OCI-LY7 (cell line): ENCODE measurements at regions of chr16 and their contacts with region 1.

Region 1: DNA sequence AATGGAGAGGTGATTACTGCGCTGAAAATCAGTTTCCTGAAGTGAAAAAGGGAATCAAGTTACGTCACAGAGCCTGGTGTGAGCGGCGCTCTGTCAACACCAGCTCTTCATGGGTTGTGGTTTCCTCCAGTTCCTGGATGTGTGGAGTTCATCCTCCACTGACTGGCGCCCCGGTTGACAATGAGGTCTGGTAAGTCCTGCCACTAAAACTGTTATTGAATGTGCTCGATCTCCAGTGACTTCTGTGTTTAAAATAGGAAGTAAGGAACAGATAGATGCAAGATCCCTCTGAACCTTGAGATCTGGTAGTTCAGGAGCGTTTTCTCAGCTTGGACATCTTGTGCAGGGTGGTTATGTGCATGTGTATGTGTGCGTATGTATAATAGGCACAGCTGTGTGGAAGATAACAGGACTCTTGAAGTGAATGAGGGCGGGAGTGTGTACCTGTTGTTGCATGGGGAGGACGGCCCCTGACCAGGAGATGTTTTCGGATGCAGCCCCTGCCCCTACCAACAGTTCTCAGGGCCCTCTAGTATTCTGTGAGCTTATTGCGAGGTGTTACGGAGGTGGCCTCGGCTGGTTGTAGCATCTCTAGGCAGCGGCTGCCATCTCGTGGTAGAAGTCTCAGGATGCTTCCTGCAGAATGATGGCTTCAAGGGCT is 22.0 kb upstream of the GOT2 start:
- DNase-seq: peak; percentile 88
- H3K4me3 ChIP-seq: peak overlapping the region; percentile 5
- H3K27ac ChIP-seq: no peak overlapping the region
- H3K4me1 ChIP-seq: peaks cover 8% of the 10 kb centered on the region
- CTCF ChIP-seq: peak; percentile 97

Region 2: DNA sequence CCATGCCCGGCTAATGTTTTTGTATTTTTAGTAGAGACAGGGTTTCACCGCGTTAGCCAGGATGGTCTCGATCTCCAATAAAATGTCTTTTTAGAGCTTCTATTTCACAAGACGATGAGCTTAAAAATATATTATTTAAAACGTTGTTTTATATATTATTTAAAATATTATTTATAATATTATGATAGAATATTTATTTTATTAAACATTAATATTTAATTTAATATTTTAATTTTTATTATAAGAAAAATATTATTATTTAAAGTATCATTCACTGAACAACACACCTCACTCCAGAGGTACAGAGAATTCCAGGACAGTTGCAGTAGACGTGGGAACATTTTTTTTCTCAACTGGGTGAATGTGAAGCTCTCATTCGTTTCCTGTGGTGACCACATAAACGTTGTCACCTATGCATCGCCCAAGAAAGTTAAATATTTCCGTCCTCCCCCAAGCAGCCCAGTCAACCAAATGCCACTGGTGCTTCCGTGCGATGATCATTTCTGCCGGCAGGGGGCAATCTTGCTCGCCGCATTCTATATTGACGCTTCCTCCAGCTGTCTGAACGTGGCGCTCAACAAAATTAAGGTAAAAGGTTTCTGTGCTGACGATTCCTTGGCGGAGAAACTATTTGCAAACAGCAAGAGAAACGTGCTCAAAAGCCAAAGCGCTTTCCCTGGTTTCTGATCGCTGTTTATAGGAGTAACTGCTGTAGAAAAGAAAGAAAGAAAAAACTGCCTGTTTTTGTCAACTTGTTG is 419.6 kb before region 1 on chr16:
- CTCF ChIA-PET with region 1: interaction called, 6 read pairs
- POLR2A ChIA-PET with region 1: interaction called, 3 read pairs
- intact Hi-C with region 1: loop called (anchors 1 kb)
- DNase-seq: peak; percentile 86
- H3K4me3 ChIP-seq: no peak overlapping the region
- H3K27ac ChIP-seq: no peak overlapping the region
- H3K4me1 ChIP-seq: peaks cover 26% of the 10 kb centered on the region
- CTCF ChIP-seq: peak; percentile 99

Region 3: GRCh38 chr16:58494981-58495520 is 261.1 kb before region 1 on chr16:
- CTCF ChIA-PET with region 1: interaction called, 14 read pairs
- POLR2A ChIA-PET with region 1: no interaction called
- intact Hi-C with region 1: loop called (anchors 5 kb)
- DNase-seq: peak; percentile 68
- H3K4me3 ChIP-seq: no peak overlapping the region
- H3K27ac ChIP-seq: no peak overlapping the region
- H3K4me1 ChIP-seq: peaks cover 26% of the 10 kb centered on the region
- CTCF ChIP-seq: peak; percentile 71

Region 4: DNA sequence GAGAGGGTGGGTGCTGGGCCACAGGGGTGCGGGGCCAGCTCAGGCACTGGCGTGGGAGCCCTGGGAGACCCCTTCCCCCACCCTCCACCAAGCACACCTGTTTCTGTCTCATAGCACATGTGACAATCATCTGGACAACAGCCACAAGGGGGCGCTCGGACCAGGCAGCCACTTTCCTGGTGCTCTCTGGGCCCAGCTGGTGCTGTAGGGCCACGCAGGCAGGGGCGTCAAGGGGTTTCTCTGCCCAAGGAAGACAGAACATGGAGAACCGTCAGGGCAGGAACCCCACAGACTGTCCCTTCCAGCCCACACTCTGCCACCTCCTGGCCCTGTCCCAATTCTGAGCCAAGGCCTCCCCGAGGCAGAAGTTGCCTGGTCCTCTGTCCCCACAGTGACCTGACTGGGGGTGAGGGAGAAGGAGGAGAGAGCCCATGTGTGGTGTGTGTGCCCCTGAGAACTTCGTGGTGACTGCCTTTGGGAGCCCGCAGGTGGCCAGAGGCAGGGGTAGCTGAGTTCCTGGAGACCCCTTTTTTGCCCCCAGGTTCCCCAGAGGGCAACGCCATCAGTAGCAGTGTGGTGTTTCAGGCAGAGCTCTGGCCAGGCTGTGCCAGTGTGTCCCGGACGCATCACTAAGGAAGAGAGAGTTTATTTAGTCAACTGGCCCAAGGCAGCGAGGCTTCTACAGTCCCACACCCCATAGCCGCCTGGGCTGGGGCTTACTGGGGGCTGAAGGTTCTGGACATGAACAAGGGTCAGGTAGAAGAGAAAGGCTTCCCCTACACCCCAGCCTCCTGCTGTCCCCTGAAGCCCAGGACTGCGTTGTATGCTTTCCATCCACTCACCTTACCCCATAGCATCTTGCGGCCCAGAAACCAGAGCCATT is 243.9 kb before region 1 on chr16:
- CTCF ChIA-PET with region 1: no interaction called
- POLR2A ChIA-PET with region 1: interaction called, 6 read pairs
- intact Hi-C with region 1: loop called (anchors 1 kb)
- DNase-seq: peak; percentile 84
- H3K4me3 ChIP-seq: no peak overlapping the region
- H3K27ac ChIP-seq: no peak overlapping the region
- H3K4me1 ChIP-seq: peaks cover 15% of the 10 kb centered on the region
- CTCF ChIP-seq: peak; percentile 89

Region 5: GRCh38 chr16:58661199-58661830 is 94.8 kb before region 1 on chr16:
- CTCF ChIA-PET with region 1: interaction called, 4 read pairs
- POLR2A ChIA-PET with region 1: no interaction called
- intact Hi-C with region 1: loop called (anchors 1 kb)
- DNase-seq: peak; percentile 71
- H3K4me3 ChIP-seq: no peak overlapping the region
- H3K27ac ChIP-seq: no peak overlapping the region
- H3K4me1 ChIP-seq: no peaks in the 10 kb centered on the region
- CTCF ChIP-seq: peak; percentile 85

Region 6: DNA sequence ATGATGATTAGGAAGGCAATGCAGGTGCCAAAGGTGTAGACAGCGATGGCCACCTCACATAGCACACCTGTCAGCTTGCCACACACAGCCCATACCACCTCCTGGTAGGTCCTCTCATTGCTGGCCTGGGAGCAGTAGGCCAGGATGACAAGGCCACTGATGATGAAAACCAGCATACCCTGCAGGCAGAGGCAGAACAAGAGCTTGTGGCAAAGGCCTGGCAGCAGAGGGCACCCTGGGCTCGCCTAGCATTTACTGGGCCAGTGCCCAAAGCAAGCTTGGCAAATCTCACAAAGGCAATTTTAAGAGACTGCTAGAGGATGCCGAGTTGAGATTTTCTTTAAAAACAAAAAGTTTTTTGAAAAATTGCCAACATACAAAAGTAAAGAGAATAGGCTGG is 77.4 kb before region 1 on chr16:
- CTCF ChIA-PET with region 1: interaction called, 12 read pairs
- POLR2A ChIA-PET with region 1: no interaction called
- intact Hi-C with region 1: loop called (anchors 1 kb)
- DNase-seq: peak; percentile 33
- H3K4me3 ChIP-seq: no peak overlapping the region
- H3K27ac ChIP-seq: no peak overlapping the region
- H3K4me1 ChIP-seq: peaks cover 3% of the 10 kb centered on the region
- CTCF ChIP-seq: peak; percentile 36

Region 7: DNA sequence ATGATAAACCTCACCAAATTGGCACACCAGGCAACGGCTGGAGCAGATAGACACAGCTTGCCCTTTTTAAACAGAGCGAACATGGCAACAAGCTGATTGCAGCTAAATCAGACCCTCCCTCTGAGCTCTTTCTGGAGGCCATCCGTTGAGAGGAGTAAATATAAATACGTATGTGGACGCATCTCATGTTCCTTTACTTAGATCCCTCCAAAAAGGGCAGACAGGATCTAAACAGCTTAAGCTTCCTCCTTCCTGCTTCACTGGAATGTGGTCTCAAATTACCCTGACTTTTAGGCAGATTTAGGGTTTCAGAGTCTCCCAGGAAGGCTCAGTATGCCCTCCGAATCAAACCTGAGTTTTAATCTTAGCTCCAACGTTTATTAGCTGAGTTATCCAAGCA is 182.7 kb after region 1 on chr16:
- CTCF ChIA-PET with region 1: no interaction called
- POLR2A ChIA-PET with region 1: no interaction called
- intact Hi-C with region 1: no loop called
- DNase-seq: no peak
- H3K4me3 ChIP-seq: no peak overlapping the region
- H3K27ac ChIP-seq: no peak overlapping the region
- H3K4me1 ChIP-seq: no peaks in the 10 kb centered on the region
- CTCF ChIP-seq: no peak